MCF 10A (cell line): ENCODE measurements at regions of chr2 and their contacts with region 1.

Region 1: DNA sequence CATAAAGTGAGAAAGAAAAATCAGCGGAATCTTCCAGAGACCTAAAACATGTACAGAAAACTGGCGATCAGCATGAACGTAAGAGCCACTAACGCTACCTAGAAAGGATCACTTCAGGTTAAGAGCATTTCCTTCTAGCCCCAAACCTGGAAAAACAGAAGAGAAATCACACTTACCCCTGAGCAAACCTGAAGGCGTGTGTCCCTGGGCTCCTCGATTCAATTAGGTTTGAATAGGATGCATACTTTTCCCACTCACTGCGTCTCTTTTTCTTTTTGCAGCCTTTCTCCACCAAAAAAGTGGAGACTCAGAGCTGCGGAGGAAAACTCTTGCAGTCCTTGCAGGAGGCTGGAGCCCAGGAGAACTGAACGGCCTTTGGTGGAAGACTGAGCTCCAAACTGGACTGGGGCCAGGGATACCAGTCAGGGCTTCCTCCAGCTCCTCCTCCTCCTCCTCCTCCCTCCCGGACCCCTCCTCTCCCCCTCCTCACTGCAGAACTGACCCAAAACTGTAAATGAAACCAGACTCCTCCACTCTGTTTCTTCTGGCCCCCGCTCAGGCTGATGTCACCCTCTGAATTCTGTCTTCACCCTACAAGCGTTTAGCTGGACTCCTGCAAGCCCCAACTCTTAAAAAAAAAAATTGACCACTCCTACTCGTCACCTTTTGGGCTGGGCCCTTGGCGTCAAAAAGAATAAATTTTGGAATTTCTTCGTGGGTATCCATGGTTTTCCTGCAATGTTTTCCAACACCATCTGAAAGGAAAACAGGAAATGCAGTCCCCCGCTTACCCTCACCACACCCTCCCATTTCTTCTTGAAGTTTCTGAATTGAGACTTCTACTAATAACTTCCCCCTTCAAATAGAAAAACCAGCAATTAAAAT is at the start of gene COL6A3:
- DNase-seq: no peak
- H3K4me3 Mint-ChIP-seq: no peak within 1 kb of the TSS
- H3K27ac Mint-ChIP-seq: no peak within 1 kb of the TSS
- H3K4me1 Mint-ChIP-seq: no peaks in the 10 kb centered on the region
- H3K27me3 Mint-ChIP-seq: no peaks in the 10 kb centered on the region
- CTCF ChIP-seq: no peak
- total RNA-seq, gene COL6A3: 0.19 and 0.61 TPM in 2 replicates

Region 2: GRCh38 chr2:237122214-237122666 is 291.8 kb before region 1 on chr2:
- CTCF ChIA-PET with region 1: interaction called, 16 read pairs
- POLR2A ChIA-PET with region 1: interaction called, 3 read pairs
- intact Hi-C with region 1: no loop called
- DNase-seq: peak; percentile 82
- H3K4me3 Mint-ChIP-seq: no peak overlapping the region
- H3K27ac Mint-ChIP-seq: peak overlapping the region; percentile 82
- H3K4me1 Mint-ChIP-seq: peaks cover 25% of the 10 kb centered on the region
- H3K27me3 Mint-ChIP-seq: no peaks in the 10 kb centered on the region
- CTCF ChIP-seq: peak; percentile 80

Region 3: GRCh38 chr2:237154082-237154638 is 259.9 kb before region 1 on chr2:
- CTCF ChIA-PET with region 1: interaction called, 3 read pairs
- POLR2A ChIA-PET with region 1: no interaction called
- intact Hi-C with region 1: loop called (anchors 1 kb)
- DNase-seq: peak; percentile 68
- H3K4me3 Mint-ChIP-seq: no peak overlapping the region
- H3K27ac Mint-ChIP-seq: no peak overlapping the region
- H3K4me1 Mint-ChIP-seq: peaks cover 8% of the 10 kb centered on the region
- H3K27me3 Mint-ChIP-seq: no peaks in the 10 kb centered on the region
- CTCF ChIP-seq: peak; percentile 34

Region 4: DNA sequence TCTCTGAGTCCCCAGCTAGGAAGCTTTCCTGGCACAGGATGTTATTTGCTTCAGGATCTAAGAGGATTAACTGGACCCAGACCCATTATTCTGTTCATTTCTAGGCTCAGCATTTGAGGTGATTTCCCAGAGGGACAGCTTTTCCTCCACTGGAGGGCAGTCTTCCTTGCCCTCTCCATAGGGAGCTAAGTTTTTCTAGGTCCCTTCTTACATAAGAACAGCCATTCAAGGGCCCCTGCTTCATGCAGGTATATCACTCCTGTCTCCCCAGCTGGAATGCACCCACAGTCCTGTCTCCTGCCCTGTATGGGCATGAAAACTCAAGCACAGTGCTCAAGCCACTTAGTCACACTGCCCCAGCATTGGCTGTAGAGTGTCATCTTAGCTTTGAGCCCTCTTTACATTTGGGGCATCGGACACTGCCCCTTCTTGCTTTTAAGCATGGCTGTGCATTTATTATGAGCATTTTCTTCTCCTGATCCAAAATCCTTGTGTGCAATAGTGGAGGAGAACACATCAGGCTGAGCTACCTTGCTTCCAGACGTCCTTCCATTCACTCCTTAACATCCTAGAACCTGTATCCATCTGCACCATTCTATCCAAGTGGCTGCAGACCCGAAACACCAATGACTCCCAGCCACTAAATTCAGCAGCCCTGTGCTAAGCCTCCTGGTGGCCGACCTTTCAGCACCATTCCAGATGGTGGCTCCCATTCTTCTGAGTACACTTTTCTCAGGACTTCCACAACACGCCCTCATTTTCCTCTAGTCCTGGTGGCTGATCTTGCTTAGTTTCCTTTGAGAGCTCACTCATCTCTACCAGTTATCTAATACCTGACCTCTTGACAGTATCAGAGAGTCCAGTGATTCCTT is 248.4 kb before region 1 on chr2:
- CTCF ChIA-PET with region 1: interaction called, 21 read pairs
- POLR2A ChIA-PET with region 1: interaction called, 4 read pairs
- intact Hi-C with region 1: no loop called
- DNase-seq: peak; percentile 55
- H3K4me3 Mint-ChIP-seq: no peak overlapping the region
- H3K27ac Mint-ChIP-seq: peak overlapping the region; percentile 2
- H3K4me1 Mint-ChIP-seq: peaks cover 7% of the 10 kb centered on the region
- H3K27me3 Mint-ChIP-seq: no peaks in the 10 kb centered on the region
- CTCF ChIP-seq: peak; percentile 31

Region 5: GRCh38 chr2:237171396-237171795 is 242.6 kb before region 1 on chr2:
- CTCF ChIA-PET with region 1: interaction called, 21 read pairs
- POLR2A ChIA-PET with region 1: interaction called, 7 read pairs
- intact Hi-C with region 1: loop called (anchors 1 kb)
- DNase-seq: peak; percentile 88
- H3K4me3 Mint-ChIP-seq: no peak overlapping the region
- H3K27ac Mint-ChIP-seq: peak overlapping the region; percentile 84
- H3K4me1 Mint-ChIP-seq: peaks cover 14% of the 10 kb centered on the region
- H3K27me3 Mint-ChIP-seq: no peaks in the 10 kb centered on the region
- CTCF ChIP-seq: peak; percentile 38

Region 6: GRCh38 chr2:237322564-237322963 is 91.5 kb before region 1 on chr2:
- CTCF ChIA-PET with region 1: interaction called, 4 read pairs
- POLR2A ChIA-PET with region 1: no interaction called
- intact Hi-C with region 1: loop called (anchors 1 kb)
- DNase-seq: peak; percentile 66
- H3K4me3 Mint-ChIP-seq: no peak overlapping the region
- H3K27ac Mint-ChIP-seq: no peak overlapping the region
- H3K4me1 Mint-ChIP-seq: peaks cover 16% of the 10 kb centered on the region
- H3K27me3 Mint-ChIP-seq: no peaks in the 10 kb centered on the region
- CTCF ChIP-seq: peak; percentile 40

Region 7: DNA sequence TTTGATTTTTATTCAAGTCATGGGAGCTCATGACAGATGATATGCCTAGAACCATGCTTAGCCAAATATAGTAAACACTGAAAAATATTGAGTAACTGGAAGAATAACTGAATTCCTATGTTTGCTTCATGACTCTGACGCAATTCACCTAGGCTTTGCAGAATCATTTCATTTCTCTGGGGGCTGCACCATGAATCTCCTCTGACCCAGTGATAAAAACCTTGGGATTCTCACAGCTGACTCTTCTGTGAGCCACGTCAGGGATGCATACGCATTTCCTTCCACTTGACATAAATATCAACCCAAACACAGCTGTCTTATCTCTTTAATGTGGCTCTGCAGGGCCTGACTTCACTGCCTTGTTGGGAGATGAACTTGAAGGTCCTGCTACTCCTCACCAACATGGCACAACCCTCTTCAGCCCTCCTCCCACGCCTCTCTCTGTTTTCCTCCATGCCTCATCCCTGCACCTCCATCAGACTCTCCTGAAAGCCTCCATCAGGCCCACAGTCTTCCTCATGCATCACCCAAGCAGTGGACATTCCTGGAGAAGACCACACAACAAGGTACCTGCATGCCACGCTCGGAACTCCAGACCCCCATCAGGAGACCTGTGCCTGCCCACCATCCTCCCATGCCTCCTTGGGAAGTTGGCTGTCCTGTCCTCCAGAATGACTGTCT is 29.9 kb before region 1 on chr2:
- CTCF ChIA-PET with region 1: no interaction called
- POLR2A ChIA-PET with region 1: no interaction called
- intact Hi-C with region 1: no loop called
- DNase-seq: peak; percentile 36
- H3K4me3 Mint-ChIP-seq: no peak overlapping the region
- H3K27ac Mint-ChIP-seq: no peak overlapping the region
- H3K4me1 Mint-ChIP-seq: peaks cover 6% of the 10 kb centered on the region
- H3K27me3 Mint-ChIP-seq: peaks cover 13% of the 10 kb centered on the region
- CTCF ChIP-seq: no peak

Region 8: GRCh38 chr2:237474931-237475703 is 61.1 kb after region 1 on chr2:
- CTCF ChIA-PET with region 1: interaction called, 3 read pairs
- POLR2A ChIA-PET with region 1: interaction called, 4 read pairs
- intact Hi-C with region 1: loop called (anchors 2 kb)
- DNase-seq: peak; percentile 65
- H3K4me3 Mint-ChIP-seq: peak overlapping the region; percentile 79
- H3K27ac Mint-ChIP-seq: peak overlapping the region; percentile 94
- H3K4me1 Mint-ChIP-seq: peaks cover 9% of the 10 kb centered on the region
- H3K27me3 Mint-ChIP-seq: no peaks in the 10 kb centered on the region
- CTCF ChIP-seq: peak; percentile 92